HCT116 (cell line): ENCODE measurements at regions of chr2 and their contacts with region 1.

Region 1: DNA sequence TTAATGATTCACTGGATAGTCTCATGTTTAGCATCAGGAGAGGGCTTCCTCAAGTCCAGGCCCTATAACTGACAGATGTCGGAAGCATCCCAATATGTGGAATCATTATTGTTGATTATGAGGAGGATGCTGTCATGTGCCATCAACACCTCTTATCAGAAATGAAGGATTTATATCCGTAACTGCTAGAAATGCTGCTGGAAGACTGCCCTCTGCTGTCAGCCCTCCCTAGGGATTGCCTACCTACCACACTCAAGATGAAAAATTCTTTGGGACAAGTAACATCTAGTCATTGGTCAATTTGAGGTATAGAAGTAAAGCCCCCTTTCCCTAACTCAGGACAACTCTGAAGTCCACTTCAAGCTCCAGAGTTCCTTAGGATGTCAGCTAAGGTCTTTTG is 1166.5 kb upstream of the NXPH2 start:
- DNase-seq: peak; percentile 18
- ATAC-seq: peak; percentile 69
- H3K4me3 ChIP-seq: no peak overlapping the region
- H3K27ac ChIP-seq: no peak overlapping the region
- H3K4me1 ChIP-seq: no peaks in the 10 kb centered on the region
- H3K27me3 ChIP-seq: no peaks in the 10 kb centered on the region
- CTCF ChIP-seq: peak; percentile 40 to 61 (median 60); a peak in 5 of 6 replicates
- POLR2A ChIP-seq: no peak
- RAD21 ChIP-seq: peak; percentile 50

Region 2: DNA sequence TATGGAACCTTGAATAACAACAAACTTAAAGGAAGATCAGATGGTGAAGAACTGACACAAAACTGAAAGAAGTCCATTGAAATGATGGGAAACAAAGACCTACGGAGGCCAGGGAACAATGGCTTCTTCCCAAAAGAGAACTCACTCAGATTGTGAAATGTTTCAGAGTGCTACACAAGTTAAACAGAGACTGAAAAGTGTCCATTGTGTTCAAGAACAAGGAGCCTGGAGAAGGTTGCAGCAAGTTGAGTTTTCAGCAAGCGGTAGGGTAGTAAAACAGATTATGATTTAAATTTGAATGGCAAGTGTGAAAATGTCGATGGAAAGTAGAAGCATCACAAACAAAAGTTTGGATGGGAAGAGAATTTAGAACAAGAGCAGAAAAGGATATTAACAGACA is 466.4 kb before region 1 on chr2:
- CTCF ChIA-PET with region 1: no interaction called
- POLR2A ChIA-PET with region 1: no interaction called
- RAD21 ChIA-PET with region 1: no interaction called
- intact Hi-C with region 1: loop called (anchors 5 kb)
- DNase-seq: no peak
- ATAC-seq: no peak
- H3K4me3 ChIP-seq: no peak overlapping the region
- H3K27ac ChIP-seq: no peak overlapping the region
- H3K4me1 ChIP-seq: no peaks in the 10 kb centered on the region
- H3K27me3 ChIP-seq: no peaks in the 10 kb centered on the region
- CTCF ChIP-seq: no peak
- POLR2A ChIP-seq: no peak
- RAD21 ChIP-seq: no peak

Region 3: DNA sequence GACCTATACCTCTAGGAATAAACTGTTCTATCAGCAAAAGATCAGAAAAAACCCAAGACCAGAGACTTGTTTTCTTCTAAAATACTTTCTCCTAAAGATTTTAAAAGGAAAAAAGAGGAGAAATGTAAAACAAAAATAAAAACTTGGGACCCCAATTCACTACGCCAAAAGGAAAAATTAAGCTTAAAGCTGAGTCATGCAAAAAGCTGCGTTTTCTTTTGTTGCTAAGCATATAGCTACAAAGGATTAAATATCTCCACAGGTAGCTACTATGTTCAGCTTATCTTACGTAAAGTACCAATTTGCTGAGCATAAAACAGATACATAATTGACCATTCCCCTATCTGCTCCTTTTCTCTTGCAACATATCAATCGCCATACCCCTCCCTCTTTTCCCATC is 216.5 kb before region 1 on chr2:
- CTCF ChIA-PET with region 1: no interaction called
- POLR2A ChIA-PET with region 1: no interaction called
- RAD21 ChIA-PET with region 1: no interaction called
- intact Hi-C with region 1: no loop called
- DNase-seq: no peak
- ATAC-seq: no peak
- H3K4me3 ChIP-seq: no peak overlapping the region
- H3K27ac ChIP-seq: no peak overlapping the region
- H3K4me1 ChIP-seq: no peaks in the 10 kb centered on the region
- H3K27me3 ChIP-seq: no peaks in the 10 kb centered on the region
- CTCF ChIP-seq: no peak
- POLR2A ChIP-seq: no peak
- RAD21 ChIP-seq: no peak

Region 4: DNA sequence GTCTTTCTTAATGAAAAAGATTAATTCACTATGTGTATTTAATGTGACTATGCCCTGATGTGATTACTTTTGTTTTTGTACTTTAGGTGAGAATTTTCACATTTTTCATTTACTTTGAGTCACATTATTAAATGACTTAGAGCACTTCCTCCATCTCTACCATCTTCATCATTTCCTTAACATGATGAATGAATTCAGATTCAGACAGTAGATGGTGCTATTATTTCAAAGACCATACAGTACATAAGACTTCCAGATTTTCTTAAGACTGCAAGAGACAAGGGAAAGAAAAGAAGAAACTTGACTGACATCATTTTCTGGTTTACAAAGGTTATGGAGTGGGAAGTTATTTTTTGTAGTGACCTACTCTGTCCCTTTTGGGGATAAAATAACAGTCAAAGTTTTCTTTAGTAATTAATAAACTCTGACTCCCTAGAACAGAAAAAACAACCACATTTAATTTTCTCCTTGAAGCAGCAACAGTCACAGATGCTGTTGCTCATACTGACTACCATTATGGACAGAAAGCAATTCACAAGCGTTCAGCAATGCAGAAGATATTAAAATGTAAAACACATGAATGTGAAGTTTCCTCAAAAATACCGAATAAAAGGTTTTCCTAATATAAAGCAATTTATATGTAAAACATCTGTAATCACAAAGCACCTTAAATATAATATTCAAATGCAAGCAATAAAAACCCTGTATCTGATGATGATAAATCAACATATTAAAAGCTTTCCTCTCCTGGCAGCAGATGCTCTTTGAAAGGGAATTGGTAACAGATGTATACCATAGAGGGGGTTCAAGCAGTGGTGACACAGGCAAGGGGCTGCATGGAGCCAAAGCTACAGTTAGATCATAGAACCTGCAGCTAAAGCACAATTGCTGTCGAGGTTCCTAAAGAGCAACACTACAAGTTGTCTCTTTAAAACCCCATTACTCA is 155.6 kb before region 1 on chr2:
- CTCF ChIA-PET with region 1: no interaction called
- POLR2A ChIA-PET with region 1: no interaction called
- RAD21 ChIA-PET with region 1: no interaction called
- intact Hi-C with region 1: loop called (anchors 5 kb)
- DNase-seq: peak; percentile 29
- ATAC-seq: peak; percentile 66
- H3K4me3 ChIP-seq: no peak overlapping the region
- H3K27ac ChIP-seq: no peak overlapping the region
- H3K4me1 ChIP-seq: no peaks in the 10 kb centered on the region
- H3K27me3 ChIP-seq: no peaks in the 10 kb centered on the region
- CTCF ChIP-seq: peak; percentile 25 to 56 (median 44); a peak in 4 of 6 replicates
- POLR2A ChIP-seq: no peak
- RAD21 ChIP-seq: peak; percentile 74